ENCODE measurements at regions of chr17 and their contacts with region 1.

Region 1: GRCh38 chr17:50478391-50479381 is at the start of gene RSAD1:
- DNase-seq: peak; percentile 93
- ATAC-seq: peak; percentile 94
- H3K4me3 Mint-ChIP-seq: peak within 1 kb of the TSS; percentile 85
- H3K27ac Mint-ChIP-seq: peak within 1 kb of the TSS; percentile 93
- H3K4me1 Mint-ChIP-seq: peaks cover 25% of the 10 kb centered on the region
- H3K27me3 Mint-ChIP-seq: no peaks in the 10 kb centered on the region
- total RNA-seq, gene RSAD1: 21.5 to 29.0 TPM

Region 2: DNA sequence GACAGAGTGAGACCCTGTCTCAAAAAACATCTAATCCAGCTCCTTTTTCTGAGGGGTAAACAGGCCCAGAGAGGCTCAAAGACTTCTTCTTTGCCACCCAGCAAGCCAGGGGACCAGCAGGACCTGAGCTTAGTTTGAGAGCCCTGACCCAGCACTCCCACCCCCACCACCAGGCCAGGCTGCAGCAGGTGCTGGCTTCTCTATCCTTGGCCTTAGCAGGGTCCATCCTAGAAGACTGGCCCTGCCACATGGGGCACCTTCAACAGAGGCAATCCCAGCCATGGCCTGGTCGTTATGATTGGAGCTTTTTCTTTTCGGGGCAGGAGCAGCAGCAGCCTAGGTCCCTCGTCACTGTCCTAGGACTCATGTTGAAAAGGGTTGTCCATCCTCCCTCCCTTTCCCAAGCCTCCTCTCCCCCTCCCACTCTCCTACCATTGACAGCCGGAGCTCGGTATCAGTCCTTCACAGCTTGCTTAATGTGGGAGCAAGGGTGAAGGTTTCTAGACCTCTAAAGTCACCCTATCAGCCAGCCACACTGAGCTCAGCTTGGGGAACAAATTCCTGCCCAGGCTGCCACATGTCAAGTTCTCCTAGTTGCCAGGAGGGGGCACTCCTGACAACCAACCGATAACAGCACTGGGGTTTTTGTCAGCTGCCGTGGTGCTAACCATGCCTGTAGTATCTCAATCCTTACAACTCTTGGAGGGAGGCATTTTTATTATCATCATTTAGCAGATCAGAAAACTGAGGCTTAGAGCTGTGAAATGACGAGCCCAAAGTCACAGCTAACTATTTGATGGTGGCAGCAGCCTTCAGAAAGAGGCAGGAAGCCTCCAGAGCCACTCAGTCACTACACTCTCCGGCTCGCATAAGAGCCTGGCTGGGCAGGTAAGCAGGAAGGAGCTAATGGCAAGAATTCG is 116.9 kb before region 1 on chr17:
- CTCF ChIA-PET with region 1: interaction called, 13 read pairs
- POLR2A ChIA-PET with region 1: no interaction called
- intact Hi-C with region 1: loop called in 1 of 2 experiments (anchors 1 kb)
- DNase-seq: peak; percentile 76
- ATAC-seq: peak; percentile 95
- H3K4me3 Mint-ChIP-seq: no peak overlapping the region
- H3K27ac Mint-ChIP-seq: peak overlapping the region; percentile 80
- H3K4me1 Mint-ChIP-seq: peaks cover 8% of the 10 kb centered on the region
- H3K27me3 Mint-ChIP-seq: no peaks in the 10 kb centered on the region

Region 3: GRCh38 chr17:50425682-50426471 is 52.8 kb before region 1 on chr17 and contains the start of gene ACSF2:
- CTCF ChIA-PET with region 1: interaction called, 4 read pairs
- POLR2A ChIA-PET with region 1: no interaction called
- intact Hi-C with region 1: loop called in 1 of 2 experiments (anchors 1 kb)
- DNase-seq: peak; percentile 86
- ATAC-seq: peak; percentile 84
- H3K4me3 Mint-ChIP-seq: peak within 1 kb of the TSS; percentile 76
- H3K27ac Mint-ChIP-seq: peak within 1 kb of the TSS; percentile 70
- H3K4me1 Mint-ChIP-seq: peaks cover 32% of the 10 kb centered on the region
- H3K27me3 Mint-ChIP-seq: no peaks in the 10 kb centered on the region
- total RNA-seq, gene ACSF2: 15.0 to 15.7 TPM

Region 4: GRCh38 chr17:50541716-50542688 is 63.3 kb after region 1 on chr17:
- CTCF ChIA-PET with region 1: interaction called, 5 read pairs
- POLR2A ChIA-PET with region 1: no interaction called
- intact Hi-C with region 1: loop called (anchors 1 to 5 kb)
- DNase-seq: peak; percentile 91
- ATAC-seq: peak; percentile 87
- H3K4me3 Mint-ChIP-seq: peak overlapping the region; percentile 72
- H3K27ac Mint-ChIP-seq: peak overlapping the region; percentile 82
- H3K4me1 Mint-ChIP-seq: peaks cover 11% of the 10 kb centered on the region
- H3K27me3 Mint-ChIP-seq: peaks cover 7% of the 10 kb centered on the region

Region 5: GRCh38 chr17:50626037-50626574 is 147.4 kb after region 1 on chr17:
- CTCF ChIA-PET with region 1: interaction called, 6 read pairs
- POLR2A ChIA-PET with region 1: no interaction called
- intact Hi-C with region 1: loop called (anchors 1 to 5 kb)
- DNase-seq: peak; percentile 83
- ATAC-seq: peak; percentile 88
- H3K4me3 Mint-ChIP-seq: no peak overlapping the region
- H3K27ac Mint-ChIP-seq: no peak overlapping the region
- H3K4me1 Mint-ChIP-seq: no peaks in the 10 kb centered on the region
- H3K27me3 Mint-ChIP-seq: peaks cover 21% of the 10 kb centered on the region